GM10248 (cell line): ENCODE measurements at regions of chr4 and their contacts with region 1.

Region 1: DNA sequence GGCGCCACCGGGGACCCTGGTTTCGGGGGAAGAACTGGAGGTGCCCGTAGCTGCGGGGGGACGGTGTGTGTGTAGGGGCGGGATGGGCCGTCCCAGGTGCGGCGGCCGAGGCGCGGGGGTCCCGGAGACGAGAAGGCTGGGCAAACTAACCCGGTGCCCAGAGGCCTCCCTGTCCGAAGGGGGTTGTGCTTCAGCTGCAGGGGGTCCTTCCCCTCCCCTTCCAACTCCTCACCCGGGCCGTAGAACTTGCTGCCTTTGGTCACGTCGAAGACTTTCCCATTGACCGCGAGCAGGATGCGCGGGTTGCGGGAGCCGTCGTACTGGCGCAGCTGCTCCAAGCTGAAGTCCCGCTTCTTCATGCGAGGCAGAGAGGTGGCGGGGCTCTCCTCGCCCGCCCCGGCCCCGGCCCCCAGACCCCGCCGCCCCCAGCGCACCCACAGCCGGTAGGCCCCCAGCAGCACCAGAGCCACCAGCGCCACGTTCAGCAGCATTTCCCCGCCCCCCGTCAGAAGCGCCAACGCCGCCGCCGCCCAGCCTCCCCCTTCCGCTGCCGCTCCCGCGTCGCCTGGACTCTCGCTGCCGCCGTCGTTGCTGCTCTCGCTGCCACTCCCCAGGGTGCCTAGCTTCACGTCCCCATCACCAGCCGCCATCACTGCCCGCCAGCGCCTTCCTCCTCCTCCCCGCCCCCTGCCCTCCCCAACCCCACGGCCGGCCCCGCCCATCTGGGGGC is at the start of gene PGRMC2:
- DNase-seq: no peak
- CTCF ChIP-seq: no peak

Region 2: DNA sequence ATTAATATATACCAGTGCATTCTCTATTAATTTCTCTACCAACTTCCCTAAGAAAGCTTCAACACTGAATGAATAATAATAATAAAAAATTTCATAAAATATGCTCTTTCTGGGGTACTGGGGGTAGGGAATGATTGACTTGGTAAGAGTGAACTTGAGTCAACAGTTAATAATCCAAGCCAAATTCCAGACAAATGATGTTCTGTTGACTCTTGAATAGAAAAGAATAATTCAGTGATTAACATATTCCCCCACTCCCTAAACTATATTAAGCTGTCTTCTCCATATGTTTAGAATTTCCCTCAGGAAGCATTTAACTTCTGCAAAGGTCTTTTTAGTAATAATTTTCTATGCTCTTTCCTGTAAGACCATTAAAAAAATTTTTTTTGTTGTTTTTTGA is 12.0 kb before region 1 on chr4:
- CTCF ChIA-PET with region 1: interaction called, 13 read pairs
- POLR2A ChIA-PET with region 1: no interaction called
- DNase-seq: no peak
- CTCF ChIP-seq: no peak

Region 3: DNA sequence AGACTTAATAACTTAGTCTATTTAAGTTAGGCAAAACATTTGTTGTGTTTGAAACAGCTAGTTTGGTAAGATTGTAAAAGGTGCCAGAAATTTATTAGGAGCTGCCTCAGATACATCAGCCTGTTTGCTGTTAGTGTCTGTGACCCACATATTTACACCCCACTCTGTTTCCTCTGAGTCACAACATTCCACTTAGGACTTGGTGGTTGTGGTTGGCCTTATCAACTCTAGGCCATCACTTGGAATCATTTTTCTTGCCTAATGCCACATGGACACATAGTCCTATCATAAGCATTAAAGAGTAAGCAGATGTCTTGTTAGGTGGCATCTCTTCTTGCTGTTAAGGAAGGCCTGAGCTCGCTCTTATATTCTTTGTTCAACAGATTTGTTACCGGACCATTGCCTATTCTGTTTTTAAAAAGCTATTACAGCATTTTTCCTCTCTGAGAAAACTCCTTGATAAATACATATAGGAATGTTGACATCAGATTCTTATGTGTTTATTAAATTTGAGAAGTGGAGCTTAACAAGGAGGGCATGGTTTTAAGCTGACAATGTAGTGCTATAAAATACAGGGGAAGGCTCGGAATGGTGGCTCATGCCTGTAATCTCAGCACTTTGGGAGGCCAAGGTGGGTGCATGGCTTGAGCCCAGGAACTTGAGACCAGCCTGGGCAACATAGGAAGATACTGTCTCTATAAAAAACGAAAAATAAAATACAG is 51.5 kb after region 1 on chr4:
- CTCF ChIA-PET with region 1: no interaction called
- POLR2A ChIA-PET with region 1: no interaction called
- DNase-seq: no peak
- CTCF ChIP-seq: no peak

Region 4: DNA sequence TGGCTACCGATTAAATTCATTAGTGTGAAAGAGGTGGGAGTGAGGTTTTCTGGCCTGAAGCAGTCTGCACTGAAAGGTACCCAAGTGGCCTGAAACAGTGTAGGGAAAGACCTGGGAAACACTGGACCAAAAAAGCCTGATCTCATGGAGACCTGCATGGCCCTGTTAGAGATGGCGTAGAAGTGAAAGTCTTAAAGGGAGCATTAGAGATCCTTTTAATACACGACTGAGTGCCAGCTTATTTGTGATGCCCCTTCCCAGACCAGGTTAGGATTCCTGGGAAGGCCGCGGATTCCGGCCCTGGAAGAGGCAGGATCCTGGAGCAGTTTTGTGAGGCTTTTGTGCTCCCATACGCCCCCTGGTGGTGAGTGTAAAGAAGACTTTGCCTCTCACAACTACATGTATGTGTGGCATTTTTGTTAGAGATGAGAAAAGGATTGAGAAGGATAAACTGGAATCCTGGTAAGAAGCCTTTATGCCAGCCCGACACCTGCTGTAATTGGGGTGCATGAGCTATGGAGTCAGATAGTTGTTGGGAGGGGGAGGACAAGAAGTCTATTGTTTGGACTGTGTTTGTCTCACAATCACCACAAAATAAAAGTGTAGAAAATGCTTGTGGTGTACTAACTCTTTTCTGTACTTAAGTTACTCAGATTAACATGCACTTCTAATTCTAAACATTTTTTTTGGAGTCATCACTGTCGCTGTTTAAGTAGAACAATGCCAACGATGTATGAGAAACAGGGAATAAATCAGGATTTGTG is 576.2 kb after region 1 on chr4:
- CTCF ChIA-PET with region 1: no interaction called
- POLR2A ChIA-PET with region 1: no interaction called
- DNase-seq: peak; percentile 50
- CTCF ChIP-seq: peak; percentile 67